HepG2 (cell line): ENCODE measurements at regions of chr19 and their contacts with region 1.

Region 1: GRCh38 chr19:49640113-49640898 is at the start of gene RRAS:
- DNase-seq: peak; percentile 98
- ATAC-seq: peak; percentile 77
- H3K4me3 ChIP-seq: peak within 1 kb of the TSS; percentile 82 to 89 (median 83)
- H3K27ac ChIP-seq: peak within 1 kb of the TSS; percentile 98
- H3K4me1 ChIP-seq: peaks cover 43% of the 10 kb centered on the region
- H3K27me3 ChIP-seq: no peaks in the 10 kb centered on the region; a peak in 1 of 5 replicates
- CTCF ChIP-seq: no peak
- EP300 ChIP-seq: peak; percentile 37 to 60; a peak in 3 of 4 replicates
- POLR2A ChIP-seq: peak in 1 of 2 experiments; percentile 76; a peak in 3 of 4 replicates
- RAD21 ChIP-seq: no peak
- total RNA-seq, gene RRAS: 0.79 and 1.5 TPM in 2 replicates

Region 2: DNA sequence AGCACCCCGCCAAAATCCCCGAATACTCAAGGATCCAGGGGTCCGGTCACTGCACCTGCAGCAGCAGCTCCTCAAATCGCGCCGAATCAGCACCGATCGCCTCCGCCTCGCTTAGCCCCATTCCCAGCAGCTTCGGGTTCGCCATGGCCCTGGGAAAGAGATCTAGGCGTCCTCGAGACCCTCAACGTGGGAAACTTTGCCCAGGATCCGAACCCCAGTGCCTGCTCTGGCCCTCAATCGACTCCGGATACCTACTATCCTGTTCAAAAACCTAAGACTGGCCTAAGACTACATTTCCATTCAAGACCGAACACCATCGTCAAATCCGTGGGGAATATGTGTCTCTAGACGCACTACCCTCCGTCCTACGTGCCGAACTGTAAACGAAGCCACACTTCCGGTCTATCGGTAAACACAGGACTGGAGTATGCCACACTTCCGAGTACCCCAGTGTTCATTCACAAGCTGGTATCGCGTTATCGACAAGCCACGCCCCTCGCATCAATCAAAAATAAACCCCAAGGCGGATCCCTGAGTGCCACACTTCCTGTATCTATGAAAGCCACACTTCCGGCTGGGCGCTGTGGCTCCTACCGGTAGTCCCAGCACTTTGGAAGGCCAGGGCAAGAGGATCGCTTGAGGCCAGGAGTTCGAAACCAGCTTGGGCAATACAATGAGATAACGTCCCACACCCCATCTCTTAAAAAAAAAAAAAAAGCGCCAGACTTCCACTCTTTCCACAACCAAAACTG is 188.7 kb before region 1 on chr19 and contains the start of gene PIH1D1:
- CTCF ChIA-PET with region 1: no interaction called
- POLR2A ChIA-PET with region 1: interaction called, 34 read pairs
- in situ Hi-C with region 1: no loop called
- intact Hi-C with region 1: no loop called
- DNase-seq: peak; percentile 99
- ATAC-seq: peak; percentile 85
- H3K4me3 ChIP-seq: peak within 1 kb of the TSS; percentile 93 to 98 (median 95)
- H3K27ac ChIP-seq: peak within 1 kb of the TSS; percentile 99
- H3K4me1 ChIP-seq: peaks cover 35% of the 10 kb centered on the region
- H3K27me3 ChIP-seq: no peaks in the 10 kb centered on the region; a peak in 1 of 5 replicates
- CTCF ChIP-seq: peak; percentile 23; the same call in 1 of the 2 replicates
- EP300 ChIP-seq: no peak
- POLR2A ChIP-seq: peak; percentile 83 to 93
- RAD21 ChIP-seq: no peak
- total RNA-seq, gene PIH1D1: 94.9 and 110 TPM in 2 replicates

Region 3: GRCh38 chr19:49580264-49581006 is 59.9 kb before region 1 on chr19 and contains the start of gene NOSIP:
- CTCF ChIA-PET with region 1: no interaction called
- POLR2A ChIA-PET with region 1: interaction called, 21 read pairs
- in situ Hi-C with region 1: no loop called
- intact Hi-C with region 1: no loop called
- DNase-seq: peak; percentile 93
- ATAC-seq: peak; percentile 94
- H3K4me3 ChIP-seq: peak within 1 kb of the TSS; percentile 75 to 94 (median 88)
- H3K27ac ChIP-seq: peak within 1 kb of the TSS; percentile 61
- H3K4me1 ChIP-seq: peaks cover 35% of the 10 kb centered on the region
- H3K27me3 ChIP-seq: peaks cover 0 to 5% of the 10 kb centered on the region in 2 experiments; a peak in 1 of 5 replicates
- CTCF ChIP-seq: no peak; the same call in 1 of the 2 replicates
- EP300 ChIP-seq: peak; percentile 27 to 57; a peak in 1 of 4 replicates
- POLR2A ChIP-seq: peak; percentile 99 to 100
- RAD21 ChIP-seq: peak; percentile 28; the same call in 1 of the 2 replicates
- total RNA-seq, gene NOSIP: 78.0 and 81.4 TPM in 2 replicates

Region 4: GRCh38 chr19:49590071-49590970 is 50.0 kb before region 1 on chr19:
- CTCF ChIA-PET with region 1: no interaction called
- POLR2A ChIA-PET with region 1: interaction called, 58 read pairs
- in situ Hi-C with region 1: no loop called
- intact Hi-C with region 1: loop called (anchors 1 kb)
- DNase-seq: peak; percentile 97
- ATAC-seq: peak; percentile 92
- H3K4me3 ChIP-seq: peak overlapping the region; percentile 70 to 97 (median 89)
- H3K27ac ChIP-seq: peak overlapping the region; percentile 92
- H3K4me1 ChIP-seq: peaks cover 31% of the 10 kb centered on the region
- H3K27me3 ChIP-seq: no peaks in the 10 kb centered on the region; a peak in 1 of 5 replicates
- CTCF ChIP-seq: 0 out of 2 replicates have a peak, but pooled peaks have one; percentile 21
- EP300 ChIP-seq: no peak
- POLR2A ChIP-seq: peak; percentile 97 to 98
- RAD21 ChIP-seq: 0 out of 2 replicates have a peak, but pooled peaks have one; percentile 11

Region 5: DNA sequence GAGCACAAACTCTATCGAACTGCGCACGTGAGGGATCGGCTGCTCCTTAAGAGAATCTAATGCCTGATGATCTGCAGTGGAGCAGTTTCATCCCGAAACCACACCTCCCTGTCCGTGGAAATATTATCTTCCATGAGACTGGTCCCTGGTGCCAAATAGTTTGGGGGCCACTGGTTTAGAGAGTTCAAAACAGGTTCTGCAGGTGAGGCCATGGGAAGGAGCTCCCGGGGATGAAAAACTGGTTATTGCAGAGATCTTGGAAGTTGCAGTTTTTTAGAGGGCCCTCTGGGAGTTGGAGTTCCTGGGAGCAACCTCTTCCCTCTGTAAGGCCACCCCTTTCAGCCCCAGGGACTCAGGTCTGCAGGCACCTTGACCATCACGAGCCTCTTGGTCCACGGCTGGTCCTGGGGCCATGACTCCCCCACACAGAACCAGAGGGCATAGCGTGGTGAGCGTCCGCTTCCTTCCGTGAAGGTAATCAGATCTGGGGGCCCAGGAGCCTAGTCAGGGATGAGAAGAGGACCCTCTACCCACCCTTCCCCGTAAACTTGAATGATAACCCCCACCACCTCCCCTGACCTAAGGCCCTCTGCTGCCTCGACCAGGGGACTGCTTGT is 20.1 kb after region 1 on chr19:
- CTCF ChIA-PET with region 1: no interaction called
- POLR2A ChIA-PET with region 1: interaction called, 92 read pairs
- in situ Hi-C with region 1: no loop called
- intact Hi-C with region 1: loop called (anchors 2 kb)
- DNase-seq: no peak
- ATAC-seq: no peak
- H3K4me3 ChIP-seq: no peak overlapping the region
- H3K27ac ChIP-seq: no peak overlapping the region
- H3K4me1 ChIP-seq: peaks cover 27% of the 10 kb centered on the region
- H3K27me3 ChIP-seq: no peaks in the 10 kb centered on the region; a peak in 1 of 5 replicates
- CTCF ChIP-seq: no peak
- EP300 ChIP-seq: no peak
- POLR2A ChIP-seq: no peak
- RAD21 ChIP-seq: no peak

Region 6: GRCh38 chr19:49665351-49666119 is 25.2 kb after region 1 on chr19 and contains the starts of genes BCL2L12 and IRF3:
- CTCF ChIA-PET with region 1: no interaction called
- POLR2A ChIA-PET with region 1: interaction called, 92 read pairs
- in situ Hi-C with region 1: no loop called
- intact Hi-C with region 1: loop called (anchors 2 kb)
- DNase-seq: peak; percentile 92
- ATAC-seq: peak; percentile 81
- H3K4me3 ChIP-seq: peak within 1 kb of the TSS; percentile 63 to 96 (median 93)
- H3K27ac ChIP-seq: peak within 1 kb of the TSS; percentile 74
- H3K4me1 ChIP-seq: peaks cover 27% of the 10 kb centered on the region
- H3K27me3 ChIP-seq: no peaks in the 10 kb centered on the region; a peak in 1 of 5 replicates
- CTCF ChIP-seq: peak; percentile 33; the same call in 1 of the 2 replicates
- EP300 ChIP-seq: no peak
- POLR2A ChIP-seq: peak; percentile 32 to 69; a peak in 2 of 4 replicates
- RAD21 ChIP-seq: no peak
- total RNA-seq, gene BCL2L12: 32.6 and 40.8 TPM in 2 replicates
- total RNA-seq, gene IRF3: 61.0 and 65.5 TPM in 2 replicates

Region 7: DNA sequence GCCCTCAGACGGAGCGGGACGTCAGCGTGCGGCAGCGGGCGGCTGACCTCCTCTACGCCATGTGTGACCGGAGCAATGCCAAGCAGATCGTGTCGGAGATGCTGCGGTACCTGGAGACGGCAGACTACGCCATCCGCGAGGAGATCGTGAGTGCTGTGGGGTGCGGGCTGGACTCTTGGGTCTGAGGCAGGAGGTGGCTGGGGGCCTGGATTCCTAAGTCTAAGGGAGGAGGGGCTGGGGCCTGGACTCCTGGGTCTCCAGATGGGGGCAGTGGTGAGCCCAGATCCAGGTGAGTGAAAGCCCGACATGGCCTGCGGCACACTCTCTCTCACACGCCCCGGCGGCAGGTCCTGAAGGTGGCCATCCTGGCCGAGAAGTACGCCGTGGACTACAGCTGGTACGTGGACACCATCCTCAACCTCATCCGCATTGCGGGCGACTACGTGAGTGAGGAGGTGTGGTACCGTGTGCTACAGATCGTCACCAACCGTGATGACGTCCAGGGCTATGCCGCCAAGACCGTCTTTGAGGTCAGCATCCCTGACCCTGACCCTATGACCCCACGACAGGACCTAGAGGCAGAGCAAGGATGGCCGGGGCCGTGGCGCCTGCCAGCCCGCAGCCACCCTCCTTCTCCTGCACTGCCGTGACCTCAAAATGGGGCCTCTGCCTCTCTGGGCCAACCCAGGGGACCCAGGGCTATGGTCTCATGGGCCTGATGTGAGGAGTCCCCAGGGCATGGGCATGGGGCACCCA is 159.5 kb after region 1 on chr19:
- CTCF ChIA-PET with region 1: no interaction called
- POLR2A ChIA-PET with region 1: no interaction called
- in situ Hi-C with region 1: no loop called
- intact Hi-C with region 1: no loop called
- DNase-seq: no peak
- ATAC-seq: peak; percentile 22; the same call in 1 of the 3 replicates
- H3K4me3 ChIP-seq: no peak overlapping the region
- H3K27ac ChIP-seq: no peak overlapping the region
- H3K4me1 ChIP-seq: no peaks in the 10 kb centered on the region
- H3K27me3 ChIP-seq: no peaks in the 10 kb centered on the region
- CTCF ChIP-seq: peak; percentile 51
- EP300 ChIP-seq: no peak
- POLR2A ChIP-seq: no peak
- RAD21 ChIP-seq: no peak